Naive thymus-derived CD8-positive, alpha-beta T cell (primary cell): ENCODE measurements at regions of chr5 and their contacts with region 1.

Region 1: DNA sequence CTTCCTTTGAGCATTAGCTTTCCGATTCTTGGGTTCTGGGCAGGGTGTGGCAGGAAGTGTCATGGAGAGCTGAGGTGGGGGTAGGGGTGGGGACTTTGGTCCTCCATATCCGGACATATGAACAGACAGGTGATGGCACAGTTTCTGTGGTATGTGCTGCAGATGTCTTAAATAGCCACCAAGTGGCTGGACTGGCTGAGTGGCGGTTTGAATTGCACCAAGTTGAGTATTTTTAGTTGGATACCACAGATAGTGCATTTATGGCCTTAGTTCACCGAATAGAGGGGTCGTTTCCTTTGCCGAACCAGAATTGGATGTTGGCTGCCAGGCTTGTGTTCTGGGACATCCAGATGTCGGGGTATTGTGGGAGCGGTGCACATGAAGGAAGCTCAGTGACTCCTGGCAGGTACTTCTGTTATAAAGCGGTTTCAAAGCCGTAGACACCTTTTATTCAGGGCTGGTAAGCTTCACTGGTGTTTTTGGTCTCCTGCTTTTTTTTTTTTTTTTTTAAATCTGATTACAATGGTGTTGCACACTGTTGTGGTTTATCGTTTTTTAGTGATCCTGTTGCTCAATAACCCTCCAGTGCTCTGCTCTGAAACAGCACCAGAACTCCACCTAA is 15.1 kb upstream of the TNFAIP8 start:
- DNase-seq: peak in 8 of 10 donors; percentile 31 to 81 (median 48)
- ATAC-seq: peak; percentile 52 to 65
- H3K4me3 Mint-ChIP-seq: peak overlapping the region; percentile 68 to 86 (median 80)
- H3K27ac Mint-ChIP-seq: peak overlapping the region; percentile 83 to 99 (median 95)
- H3K4me1 Mint-ChIP-seq: peaks cover 55 to 98% (median 93%) of the 10 kb centered on the region in 4 donors
- H3K27me3 Mint-ChIP-seq: no peaks in the 10 kb centered on the region

Region 2: GRCh38 chr5:119070828-119071572 is 269.7 kb before region 1 on chr5 and contains the start of gene DMXL1:
- POLR2A ChIA-PET with region 1: interaction called, 24 read pairs
- DNase-seq: peak; percentile 96 to 100 (median 98)
- ATAC-seq: peak; percentile 84 to 85
- H3K4me3 Mint-ChIP-seq: peak within 1 kb of the TSS; percentile 97 to 100 (median 100)
- H3K27ac Mint-ChIP-seq: peak within 1 kb of the TSS; percentile 97 to 100 (median 98)
- H3K4me1 Mint-ChIP-seq: peaks cover 12 to 49% (median 35%) of the 10 kb centered on the region in 4 donors
- H3K27me3 Mint-ChIP-seq: peaks cover 0 to 2% (median 0%) of the 10 kb centered on the region in 5 donors
- polyA plus RNA-seq, gene DMXL1: 15.0 to 19.9 (median 18.4) TPM

Region 3: DNA sequence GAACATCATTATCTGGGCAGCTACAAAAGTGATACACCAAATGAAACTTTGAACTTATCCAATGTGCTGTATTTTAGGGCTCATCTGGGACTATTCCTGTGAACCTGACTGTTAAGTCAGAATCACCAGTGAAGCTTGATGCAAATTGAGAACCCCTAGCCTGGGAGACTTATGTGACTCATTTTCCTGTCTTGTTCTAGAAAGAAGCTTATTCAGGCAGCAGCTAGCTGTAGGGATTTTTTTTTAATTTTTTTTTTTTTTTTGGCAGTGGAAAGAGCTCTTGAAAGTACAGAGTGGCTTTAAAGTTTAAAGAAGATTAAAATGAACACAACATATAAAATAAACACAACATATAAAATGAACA is 66.0 kb before region 1 on chr5:
- POLR2A ChIA-PET with region 1: interaction called, 12 read pairs
- DNase-seq: no peak
- ATAC-seq: peak in 1 of 2 donors; percentile 43
- H3K4me3 Mint-ChIP-seq: peak overlapping the region; percentile 96 to 100 (median 100)
- H3K27ac Mint-ChIP-seq: peak overlapping the region; percentile 93 to 98 (median 96)
- H3K4me1 Mint-ChIP-seq: peaks cover 42 to 98% (median 88%) of the 10 kb centered on the region in 4 donors
- H3K27me3 Mint-ChIP-seq: peaks cover 0 to 2% (median 0%) of the 10 kb centered on the region in 5 donors

Region 4: GRCh38 chr5:119315516-119315949 is 25.2 kb before region 1 on chr5:
- POLR2A ChIA-PET with region 1: interaction called, 10 read pairs
- DNase-seq: peak in 8 of 10 donors; percentile 43 to 81 (median 64)
- ATAC-seq: peak; percentile 71 to 87
- H3K4me3 Mint-ChIP-seq: peak overlapping the region; percentile 12 to 80 (median 54)
- H3K27ac Mint-ChIP-seq: peak overlapping the region; percentile 60 to 99 (median 94)
- H3K4me1 Mint-ChIP-seq: peaks cover 39 to 94% (median 91%) of the 10 kb centered on the region in 4 donors
- H3K27me3 Mint-ChIP-seq: no peaks in the 10 kb centered on the region

Region 5: DNA sequence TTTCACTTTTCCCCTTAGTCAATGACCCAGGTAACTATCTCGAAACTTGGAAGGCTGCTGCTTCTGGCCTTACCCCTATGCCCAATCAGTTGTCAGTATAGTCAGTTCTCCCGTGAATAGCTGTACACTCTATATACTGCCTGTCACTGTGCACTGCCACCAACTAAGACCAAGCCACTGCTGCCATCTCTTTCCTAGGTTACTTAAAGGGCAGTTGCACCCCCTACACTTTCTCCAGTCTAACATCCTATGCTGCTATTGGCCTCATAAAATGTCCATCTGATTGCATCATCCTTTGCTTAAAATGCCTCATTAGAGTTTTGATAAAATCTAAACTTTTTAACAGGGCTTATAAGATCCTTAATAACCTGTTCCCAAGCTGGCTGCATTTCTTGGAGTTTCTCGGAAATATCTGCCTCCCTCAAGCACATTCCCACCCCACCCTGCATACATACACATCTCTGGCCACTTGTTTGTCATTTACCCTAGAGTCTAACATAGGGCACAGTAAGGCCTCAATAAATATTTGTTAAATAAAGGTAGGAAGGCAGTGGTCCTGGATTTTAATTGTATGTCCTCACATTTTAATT is 17.7 kb before region 1 on chr5:
- POLR2A ChIA-PET with region 1: interaction called, 37 read pairs
- DNase-seq: no peak
- ATAC-seq: no peak
- H3K4me3 Mint-ChIP-seq: peak overlapping the region in 9 of 10 donors; percentile 9 to 81 (median 54)
- H3K27ac Mint-ChIP-seq: peak overlapping the region; percentile 81 to 96 (median 93)
- H3K4me1 Mint-ChIP-seq: peaks cover 64 to 96% (median 90%) of the 10 kb centered on the region in 4 donors
- H3K27me3 Mint-ChIP-seq: no peaks in the 10 kb centered on the region

Region 6: DNA sequence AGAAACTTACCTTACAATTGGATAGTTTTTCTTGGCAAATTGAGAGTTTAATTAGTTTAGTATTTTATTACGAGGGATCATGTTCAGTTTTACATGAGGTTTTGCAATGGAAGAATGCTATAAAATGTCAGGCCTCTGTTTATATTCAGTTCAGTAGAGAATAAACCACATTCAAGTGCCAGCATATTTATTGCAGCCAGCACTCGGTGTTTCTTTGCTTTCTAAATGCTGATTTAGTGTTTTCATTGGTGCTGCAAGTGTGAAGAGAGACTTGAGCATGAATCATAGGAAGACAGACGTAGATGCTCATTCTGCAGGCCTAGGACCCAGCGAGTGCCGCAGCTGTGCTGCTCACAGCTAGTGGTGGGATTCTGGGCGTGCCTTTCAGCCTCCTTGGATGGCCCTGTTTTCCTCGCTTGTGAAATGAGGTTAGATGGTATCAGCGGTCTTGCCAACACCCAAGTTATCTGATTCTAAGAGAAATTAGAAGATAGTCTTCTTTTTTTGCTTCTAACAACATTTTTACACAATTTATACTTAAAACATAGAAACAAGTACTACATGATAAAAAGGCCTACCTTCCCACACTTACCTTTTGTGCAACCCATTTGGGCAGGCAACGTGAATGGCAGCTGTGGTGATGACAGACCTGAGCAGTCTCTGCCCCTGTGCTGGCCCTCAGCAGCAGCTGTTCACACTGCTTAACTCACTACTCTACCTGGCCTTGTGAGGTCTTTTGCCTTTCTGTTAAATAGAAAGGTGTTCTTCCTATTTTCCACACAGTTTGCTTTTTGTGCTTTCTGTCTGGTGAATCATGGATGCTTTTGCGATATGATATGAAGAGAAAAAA is 11.7 kb before region 1 on chr5:
- POLR2A ChIA-PET with region 1: interaction called, 37 read pairs
- DNase-seq: peak in 8 of 10 donors; percentile 28 to 65 (median 45)
- ATAC-seq: peak; percentile 57 to 63
- H3K4me3 Mint-ChIP-seq: peak overlapping the region; percentile 53 to 87 (median 78)
- H3K27ac Mint-ChIP-seq: peak overlapping the region; percentile 89 to 99 (median 96)
- H3K4me1 Mint-ChIP-seq: peaks cover 54 to 95% (median 89%) of the 10 kb centered on the region in 4 donors
- H3K27me3 Mint-ChIP-seq: no peaks in the 10 kb centered on the region

Region 7: GRCh38 chr5:119355685-119356611 is 15.2 kb after region 1 on chr5 and contains the start of gene TNFAIP8:
- POLR2A ChIA-PET with region 1: interaction called, 18 read pairs
- DNase-seq: peak in 4 of 10 donors; percentile 32 to 46 (median 43)
- ATAC-seq: peak; percentile 53 to 58
- H3K4me3 Mint-ChIP-seq: peak within 1 kb of the TSS; percentile 78 to 92 (median 87)
- H3K27ac Mint-ChIP-seq: peak within 1 kb of the TSS; percentile 84 to 93 (median 90)
- H3K4me1 Mint-ChIP-seq: peaks cover 58 to 98% (median 90%) of the 10 kb centered on the region in 4 donors
- H3K27me3 Mint-ChIP-seq: no peaks in the 10 kb centered on the region
- polyA plus RNA-seq, gene TNFAIP8: 175 to 220 (median 188) TPM

Region 8: GRCh38 chr5:119417891-119418530 is 77.3 kb after region 1 on chr5:
- POLR2A ChIA-PET with region 1: no interaction called
- DNase-seq: no peak
- ATAC-seq: no peak
- H3K4me3 Mint-ChIP-seq: peak overlapping the region in 6 of 10 donors; percentile 5 to 38 (median 10)
- H3K27ac Mint-ChIP-seq: no peak overlapping the region
- H3K4me1 Mint-ChIP-seq: peaks cover 6 to 46% (median 11%) of the 10 kb centered on the region in 4 donors
- H3K27me3 Mint-ChIP-seq: peaks cover 0 to 3% (median 0%) of the 10 kb centered on the region in 5 donors